CD4-positive, alpha-beta T cell (primary cell): ENCODE measurements at regions of chr1 and their contacts with region 1.

Region 1: DNA sequence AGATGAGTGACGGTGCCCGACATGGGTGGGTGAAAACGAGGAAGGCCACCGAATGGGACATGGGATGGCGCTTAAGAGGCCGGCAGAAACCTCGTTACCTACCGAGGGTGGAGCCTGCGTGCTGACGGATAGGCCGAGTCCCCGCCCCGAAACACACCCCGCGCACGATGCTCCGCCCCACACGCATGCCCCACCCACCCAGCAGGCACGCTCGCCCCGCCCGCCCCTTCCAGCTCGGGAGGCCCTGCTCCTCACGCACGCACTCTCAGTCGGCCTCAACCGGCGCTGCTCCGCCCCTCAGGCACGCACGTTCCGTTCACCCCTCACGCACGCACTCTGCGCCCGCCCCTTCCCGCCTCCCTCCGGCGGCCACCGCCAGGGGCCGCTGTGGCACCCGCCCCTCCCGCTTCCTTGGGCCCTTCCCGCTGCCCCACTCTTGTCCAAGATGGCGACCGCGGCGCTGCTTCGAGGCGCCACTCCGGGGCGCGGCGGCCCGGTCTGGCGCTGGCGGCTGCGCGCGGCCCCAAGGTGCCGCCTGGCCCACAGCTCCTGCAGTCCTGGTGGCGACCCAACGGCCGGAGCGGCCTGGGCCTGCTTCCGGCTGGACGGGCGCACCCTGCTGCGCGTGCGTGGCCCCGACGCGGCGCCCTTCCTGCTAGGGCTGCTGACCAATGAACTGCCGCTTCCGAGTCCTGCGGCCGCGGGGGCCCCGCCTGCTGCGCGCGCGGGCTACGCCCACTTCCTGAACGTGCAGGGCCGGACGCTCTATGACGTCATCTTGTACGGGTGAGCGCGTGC is at the start of gene IBA57:
- DNase-seq: peak; percentile 99 to 100 (median 100)
- ATAC-seq: peak; percentile 79
- H3K4me3 ChIP-seq: peak within 1 kb of the TSS; percentile 70
- H3K4me3 Mint-ChIP-seq: peak within 1 kb of the TSS; percentile 95
- H3K27ac ChIP-seq: peak within 1 kb of the TSS; percentile 88 to 97
- H3K27ac Mint-ChIP-seq: peak within 1 kb of the TSS; percentile 98
- H3K4me1 ChIP-seq: peaks cover 45% of the 10 kb centered on the region
- H3K4me1 Mint-ChIP-seq: peaks cover 49% of the 10 kb centered on the region
- H3K27me3 ChIP-seq: no peaks in the 10 kb centered on the region
- H3K27me3 Mint-ChIP-seq: no peaks in the 10 kb centered on the region
- CTCF ChIP-seq: peak; percentile 58
- total RNA-seq, gene IBA57: 19.7 to 19.9 TPM

Region 2: DNA sequence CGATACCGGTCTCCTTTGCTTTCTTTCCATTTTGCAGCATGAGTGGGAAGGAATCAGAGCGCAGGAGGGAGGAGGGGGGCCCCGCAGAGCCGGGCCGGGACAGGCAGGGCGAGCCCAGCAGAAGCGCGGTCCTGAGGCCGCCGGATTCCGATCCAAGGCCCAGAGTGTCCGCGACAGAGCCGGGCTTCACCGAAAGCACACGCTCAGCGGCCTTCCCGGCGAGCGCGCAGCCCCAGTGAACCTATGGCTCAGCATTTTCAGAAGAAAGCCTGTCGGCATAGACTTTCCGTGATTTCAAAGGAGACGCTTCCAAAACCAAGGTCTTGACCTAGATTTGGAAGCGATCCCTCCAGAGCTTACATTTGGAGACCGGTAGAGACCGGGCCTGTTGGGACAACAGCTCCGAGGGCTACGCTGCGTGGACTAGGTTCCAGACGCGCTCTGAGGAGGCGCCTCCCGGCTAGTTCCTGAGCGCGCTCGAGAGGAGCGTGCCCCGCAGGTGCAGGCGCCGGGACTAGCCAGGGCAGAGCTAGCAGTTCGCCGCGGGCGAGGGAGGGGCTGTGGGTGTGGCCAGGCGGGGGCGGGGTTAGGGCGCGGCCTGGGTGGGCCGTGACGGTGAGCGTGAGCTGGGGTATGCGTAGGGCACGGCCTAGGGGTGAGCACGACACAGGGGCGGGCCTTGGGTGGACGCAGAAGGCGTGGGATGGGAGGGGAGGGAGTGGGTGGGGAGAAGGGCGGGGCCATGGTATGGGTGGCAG is 377.9 kb before region 1 on chr1:
- CTCF ChIA-PET with region 1: no interaction called
- POLR2A ChIA-PET with region 1: interaction called, 6 read pairs
- intact Hi-C with region 1: loop called in 1 of 2 experiments (anchors 5 kb)
- DNase-seq: peak; percentile 94 to 99 (median 96)
- ATAC-seq: peak; percentile 92
- H3K4me3 ChIP-seq: peak overlapping the region; percentile 74
- H3K4me3 Mint-ChIP-seq: peak overlapping the region; percentile 89
- H3K27ac ChIP-seq: peak overlapping the region in 1 of 2 donors; percentile 11
- H3K27ac Mint-ChIP-seq: peak overlapping the region; percentile 82
- H3K4me1 ChIP-seq: peaks cover 39% of the 10 kb centered on the region
- H3K4me1 Mint-ChIP-seq: peaks cover 34% of the 10 kb centered on the region
- H3K27me3 ChIP-seq: no peaks in the 10 kb centered on the region
- H3K27me3 Mint-ChIP-seq: no peaks in the 10 kb centered on the region
- CTCF ChIP-seq: no peak

Region 3: GRCh38 chr1:228109073-228109961 is 56.3 kb before region 1 on chr1 and contains the start of gene MRPL55:
- CTCF ChIA-PET with region 1: interaction called, 9 read pairs
- POLR2A ChIA-PET with region 1: interaction called, 11 read pairs
- intact Hi-C with region 1: loop called in 1 of 2 experiments (anchors 1 kb)
- DNase-seq: peak; percentile 96 to 100 (median 98)
- ATAC-seq: peak; percentile 92
- H3K4me3 ChIP-seq: peak within 1 kb of the TSS; percentile 99
- H3K4me3 Mint-ChIP-seq: peak within 1 kb of the TSS; percentile 92
- H3K27ac ChIP-seq: peak within 1 kb of the TSS; percentile 84 to 90
- H3K27ac Mint-ChIP-seq: peak within 1 kb of the TSS; percentile 93
- H3K4me1 ChIP-seq: peaks cover 28% of the 10 kb centered on the region
- H3K4me1 Mint-ChIP-seq: peaks cover 32% of the 10 kb centered on the region
- H3K27me3 ChIP-seq: no peaks in the 10 kb centered on the region
- H3K27me3 Mint-ChIP-seq: no peaks in the 10 kb centered on the region
- CTCF ChIP-seq: no peak
- total RNA-seq, gene MRPL55: 120 to 128 TPM

Region 4: DNA sequence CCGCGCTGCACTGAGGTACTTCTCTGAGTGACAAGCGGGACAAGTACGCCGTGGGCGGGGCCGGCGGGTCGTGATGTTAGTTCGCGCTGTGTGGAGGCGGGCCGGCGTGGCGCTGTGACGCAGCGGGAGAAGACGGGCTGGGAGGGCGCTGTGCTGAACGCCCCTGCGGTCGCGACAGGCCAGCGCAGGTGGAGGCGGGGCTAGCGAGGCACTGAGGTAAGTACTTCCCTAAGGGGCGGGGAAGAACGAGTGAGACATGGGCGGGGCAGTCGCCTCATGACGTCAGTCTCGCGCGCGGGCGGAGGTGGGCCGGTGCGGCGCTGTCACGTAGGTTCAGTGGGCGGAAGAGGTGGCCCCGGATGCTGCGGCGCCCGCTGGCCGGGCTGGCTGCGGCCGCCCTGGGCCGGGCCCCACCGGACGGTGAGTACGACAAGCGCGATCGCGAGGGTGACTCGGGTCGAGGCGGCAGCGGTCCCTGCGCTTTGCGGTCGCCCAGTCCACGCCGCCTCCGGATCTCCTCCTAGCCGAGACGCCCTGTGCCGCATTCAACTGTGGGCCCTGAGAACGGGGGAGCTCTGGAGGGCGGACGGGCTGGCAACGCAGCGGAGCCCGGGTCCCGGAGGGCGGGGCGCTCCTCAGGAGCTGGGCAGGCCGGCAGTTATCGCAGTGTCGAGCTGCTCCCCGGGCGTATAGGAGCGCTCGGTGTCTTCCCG is 25.5 kb before region 1 on chr1 and contains the start of gene GUK1:
- CTCF ChIA-PET with region 1: interaction called, 39 read pairs
- POLR2A ChIA-PET with region 1: interaction called, 56 read pairs
- intact Hi-C with region 1: loop called (anchors 1 kb)
- DNase-seq: peak; percentile 99 to 100 (median 100)
- ATAC-seq: peak; percentile 88
- H3K4me3 ChIP-seq: peak within 1 kb of the TSS; percentile 78
- H3K4me3 Mint-ChIP-seq: peak within 1 kb of the TSS; percentile 90
- H3K27ac ChIP-seq: peak within 1 kb of the TSS; percentile 92 to 97
- H3K27ac Mint-ChIP-seq: peak within 1 kb of the TSS; percentile 94
- H3K4me1 ChIP-seq: peaks cover 51% of the 10 kb centered on the region
- H3K4me1 Mint-ChIP-seq: peaks cover 44% of the 10 kb centered on the region
- H3K27me3 ChIP-seq: no peaks in the 10 kb centered on the region
- H3K27me3 Mint-ChIP-seq: no peaks in the 10 kb centered on the region
- CTCF ChIP-seq: no peak
- total RNA-seq, gene GUK1: 373 to 378 TPM

Region 5: DNA sequence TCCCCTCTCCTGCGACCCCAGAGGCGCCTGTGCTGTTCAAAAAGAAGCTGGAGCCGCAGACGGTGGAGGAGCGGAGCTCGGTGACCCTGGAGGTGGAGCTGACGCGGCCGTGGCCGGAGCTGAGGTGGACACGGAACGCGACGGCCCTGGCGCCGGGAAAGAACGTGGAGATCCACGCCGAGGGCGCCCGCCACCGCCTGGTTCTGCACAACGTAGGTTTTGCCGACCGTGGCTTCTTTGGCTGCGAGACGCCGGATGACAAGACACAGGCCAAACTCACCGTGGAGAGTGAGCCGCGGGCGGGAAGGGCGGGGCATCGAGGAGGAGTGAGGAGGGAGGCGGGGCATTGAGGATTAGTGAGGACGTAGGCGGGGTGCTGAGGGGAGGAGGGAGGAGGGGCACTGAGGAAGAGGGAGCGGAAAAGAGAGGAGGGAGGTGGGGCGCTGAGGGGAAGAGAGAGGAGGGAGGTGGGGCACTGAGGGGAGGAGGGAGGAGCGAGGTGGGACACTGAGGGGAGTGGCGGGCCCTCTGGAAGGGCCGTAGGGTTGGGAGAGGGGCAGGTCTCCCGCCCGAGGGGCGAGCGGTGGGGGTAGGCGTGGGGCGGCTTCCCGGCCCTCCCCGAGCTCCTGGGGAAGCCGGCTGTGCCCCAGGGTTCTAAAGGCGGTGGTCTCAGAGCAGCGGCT is 110.3 kb after region 1 on chr1:
- CTCF ChIA-PET with region 1: interaction called, 6 read pairs
- POLR2A ChIA-PET with region 1: interaction called, 22 read pairs
- intact Hi-C with region 1: no loop called
- DNase-seq: peak; percentile 76 to 97 (median 90)
- ATAC-seq: peak; percentile 95
- H3K4me3 ChIP-seq: peak overlapping the region; percentile 75
- H3K4me3 Mint-ChIP-seq: peak overlapping the region; percentile 82
- H3K27ac ChIP-seq: peak overlapping the region; percentile 28 to 56
- H3K27ac Mint-ChIP-seq: peak overlapping the region; percentile 81
- H3K4me1 ChIP-seq: peaks cover 27% of the 10 kb centered on the region
- H3K4me1 Mint-ChIP-seq: peaks cover 14% of the 10 kb centered on the region
- H3K27me3 ChIP-seq: no peaks in the 10 kb centered on the region
- H3K27me3 Mint-ChIP-seq: no peaks in the 10 kb centered on the region
- CTCF ChIP-seq: no peak

Region 6: GRCh38 chr1:228445843-228446650 is 280.5 kb after region 1 on chr1:
- CTCF ChIA-PET with region 1: no interaction called
- POLR2A ChIA-PET with region 1: no interaction called
- intact Hi-C with region 1: no loop called
- DNase-seq: peak in 8 of 14 experiments; percentile 5 to 69 (median 22)
- ATAC-seq: peak; percentile 78
- H3K4me3 ChIP-seq: peak overlapping the region; percentile 53
- H3K4me3 Mint-ChIP-seq: peak overlapping the region; percentile 76
- H3K27ac ChIP-seq: no peak overlapping the region
- H3K27ac Mint-ChIP-seq: no peak overlapping the region
- H3K4me1 ChIP-seq: peaks cover 15% of the 10 kb centered on the region
- H3K4me1 Mint-ChIP-seq: peaks cover 9% of the 10 kb centered on the region
- H3K27me3 ChIP-seq: peaks cover 18 to 37% of the 10 kb centered on the region in 2 experiments
- H3K27me3 Mint-ChIP-seq: peaks cover 76% of the 10 kb centered on the region
- CTCF ChIP-seq: no peak

Region 7: DNA sequence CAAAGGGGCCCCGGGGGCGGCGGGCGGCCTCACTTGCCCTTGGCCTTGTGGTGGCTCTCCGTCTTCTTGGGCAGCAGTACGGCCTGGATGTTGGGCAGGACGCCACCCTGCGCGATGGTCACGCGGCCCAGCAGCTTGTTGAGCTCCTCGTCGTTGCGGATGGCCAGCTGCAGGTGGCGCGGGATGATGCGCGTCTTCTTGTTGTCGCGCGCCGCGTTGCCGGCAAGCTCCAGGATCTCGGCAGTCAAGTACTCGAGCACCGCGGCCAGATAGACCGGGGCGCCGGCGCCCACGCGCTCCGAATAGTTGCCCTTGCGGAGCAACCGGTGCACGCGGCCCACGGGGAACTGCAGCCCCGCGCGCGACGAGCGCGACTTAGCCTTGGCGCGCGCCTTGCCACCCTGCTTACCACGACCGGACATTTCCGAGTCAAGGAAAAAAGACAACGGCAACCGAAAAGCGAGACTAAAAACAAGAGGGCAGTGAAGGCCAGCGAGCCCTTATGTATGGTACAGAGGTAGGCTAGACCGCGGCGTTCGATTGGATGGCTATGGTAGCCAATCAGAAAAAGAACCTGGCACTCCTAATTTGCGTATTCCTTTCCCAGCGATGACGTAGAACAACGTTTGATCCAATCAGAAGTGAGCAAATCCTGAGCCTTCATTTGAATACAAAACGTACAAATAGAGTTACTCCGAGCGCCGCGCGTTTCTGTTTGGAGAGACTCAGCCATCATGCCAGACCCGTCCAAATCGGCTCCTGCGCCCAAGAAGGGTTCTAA is 292.0 kb after region 1 on chr1:
- CTCF ChIA-PET with region 1: no interaction called
- POLR2A ChIA-PET with region 1: interaction called, 11 read pairs
- intact Hi-C with region 1: no loop called
- DNase-seq: peak; percentile 68 to 99 (median 76)
- ATAC-seq: peak; percentile 83
- H3K4me3 ChIP-seq: peak overlapping the region; percentile 67
- H3K4me3 Mint-ChIP-seq: peak overlapping the region; percentile 95
- H3K27ac ChIP-seq: peak overlapping the region; percentile 68 to 94
- H3K27ac Mint-ChIP-seq: peak overlapping the region; percentile 98
- H3K4me1 ChIP-seq: peaks cover 30% of the 10 kb centered on the region
- H3K4me1 Mint-ChIP-seq: peaks cover 54% of the 10 kb centered on the region
- H3K27me3 ChIP-seq: no peaks in the 10 kb centered on the region
- H3K27me3 Mint-ChIP-seq: peaks cover 5% of the 10 kb centered on the region
- CTCF ChIP-seq: no peak

Region 8: GRCh38 chr1:229117664-229118300 is 952.2 kb after region 1 on chr1:
- CTCF ChIA-PET with region 1: no interaction called
- POLR2A ChIA-PET with region 1: no interaction called
- intact Hi-C with region 1: no loop called
- DNase-seq: peak in 2 of 14 experiments; percentile 43 to 60
- ATAC-seq: no peak
- H3K4me3 ChIP-seq: no peak overlapping the region
- H3K4me3 Mint-ChIP-seq: no peak overlapping the region
- H3K27ac ChIP-seq: no peak overlapping the region
- H3K27ac Mint-ChIP-seq: no peak overlapping the region
- H3K4me1 ChIP-seq: peaks cover 4% of the 10 kb centered on the region
- H3K4me1 Mint-ChIP-seq: peaks cover 16% of the 10 kb centered on the region
- H3K27me3 ChIP-seq: no peaks in the 10 kb centered on the region
- H3K27me3 Mint-ChIP-seq: no peaks in the 10 kb centered on the region
- CTCF ChIP-seq: no peak